ENCODE measurements at regions of chr6 and their contacts with region 1.

Region 1: DNA sequence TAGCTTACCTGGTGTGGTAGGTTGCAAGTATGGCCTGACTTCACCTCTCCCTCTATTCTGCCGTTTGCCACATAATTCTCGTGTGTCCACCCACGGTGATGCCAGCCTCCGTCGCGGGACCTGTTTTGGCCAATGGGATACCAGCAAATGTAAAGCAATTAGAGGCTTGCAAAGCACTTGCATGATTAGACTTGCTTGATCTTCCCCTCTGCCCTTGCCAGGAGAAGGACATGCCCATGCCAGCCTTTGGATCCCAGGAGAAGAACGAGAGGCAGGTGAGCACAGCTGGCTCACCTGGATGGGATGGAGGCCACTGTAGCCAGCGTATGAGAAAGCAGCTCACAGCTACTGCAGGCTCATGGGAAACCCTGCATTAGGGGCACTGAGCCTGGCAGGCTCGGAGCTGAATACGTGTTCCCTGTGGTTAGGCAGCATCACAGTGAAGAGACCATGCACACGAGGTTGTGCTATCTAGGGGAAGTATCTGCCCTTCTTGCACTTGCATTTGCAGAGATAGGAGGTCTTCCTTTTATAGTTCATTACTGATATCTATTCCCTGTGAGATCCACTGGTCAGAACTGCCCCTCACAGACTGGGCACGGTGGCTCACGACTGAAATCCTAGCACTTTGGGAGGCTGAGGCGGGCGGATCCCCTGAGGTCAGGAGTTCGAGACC is 62.4 kb downstream of the TMEM242 start:
- DNase-seq: peak; percentile 38

Region 2: DNA sequence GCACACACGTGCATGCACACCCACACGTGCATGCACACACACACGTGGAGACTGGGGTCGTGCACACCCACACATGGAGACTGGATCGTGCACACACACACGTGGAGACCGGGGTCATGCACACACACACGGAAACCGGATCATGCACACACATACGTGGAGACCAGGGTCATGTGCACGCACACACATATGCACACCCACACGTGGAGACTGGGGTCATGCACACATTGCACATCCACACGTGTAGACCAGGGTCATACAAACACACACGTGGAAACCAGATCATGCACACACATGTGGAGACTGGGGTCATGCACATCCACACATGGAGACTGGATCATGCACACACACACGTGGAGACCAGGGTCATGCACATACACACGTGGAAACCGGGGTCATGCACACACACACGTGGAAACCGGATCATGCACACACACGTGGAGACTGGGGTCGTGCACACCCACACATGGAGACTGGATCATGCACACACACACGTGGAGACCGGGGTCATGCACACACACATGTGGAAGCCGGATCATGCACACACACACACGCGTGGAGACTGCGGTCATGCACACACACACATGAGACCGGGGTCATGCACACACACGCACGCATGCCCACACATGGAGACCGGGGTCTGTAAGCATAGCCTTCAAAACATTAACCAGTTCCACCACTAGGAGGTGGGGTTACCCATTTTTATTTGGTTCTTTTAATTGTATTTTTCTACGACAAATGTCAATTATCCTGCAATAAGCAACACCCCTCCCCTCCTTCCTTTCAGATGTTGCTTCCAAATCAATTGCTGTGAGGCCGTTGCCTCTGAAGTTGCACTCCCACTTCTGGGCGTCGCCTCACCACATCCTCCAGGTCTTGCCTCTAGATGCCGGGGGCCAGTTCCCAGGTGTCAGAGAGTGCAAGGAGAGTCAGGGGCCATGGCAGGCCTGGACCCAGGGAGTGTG is 33.4 kb before region 1 on chr6:
- intact Hi-C with region 1: loop called in 1 of 2 experiments (anchors 1 kb)
- DNase-seq: no peak